ENCODE measurements at regions of chr1 and their contacts with region 1.

Region 1: GRCh38 chr1:1033009-1033587 is 13.2 kb downstream of the AGRN start:
- DNase-seq: peak; percentile 52
- H3K4me3 ChIP-seq: peak overlapping the region; percentile 29 to 65 (median 47)
- H3K27ac ChIP-seq: peak overlapping the region in 2 of 4 donors; percentile 7 to 44
- H3K4me1 ChIP-seq: peaks cover 12 to 53% (median 21%) of the 10 kb centered on the region in 3 donors
- H3K27me3 ChIP-seq: peaks cover 0 to 63% (median 0%) of the 10 kb centered on the region in 4 donors
- CTCF ChIP-seq: peak; percentile 48 to 81 (median 76)
- POLR2A ChIP-seq: no peak

Region 2: GRCh38 chr1:1069061-1069708 is 36.1 kb after region 1 on chr1:
- intact Hi-C with region 1: no loop called
- DNase-seq: no peak
- H3K4me3 ChIP-seq: peak overlapping the region; percentile 29 to 70 (median 48)
- H3K27ac ChIP-seq: peak overlapping the region; percentile 78 to 89 (median 82)
- H3K4me1 ChIP-seq: peaks cover 22 to 58% (median 23%) of the 10 kb centered on the region in 3 donors
- H3K27me3 ChIP-seq: peaks cover 0 to 89% (median 8%) of the 10 kb centered on the region in 4 donors
- CTCF ChIP-seq: no peak
- POLR2A ChIP-seq: peak in 1 of 4 donors; percentile 49

Region 3: DNA sequence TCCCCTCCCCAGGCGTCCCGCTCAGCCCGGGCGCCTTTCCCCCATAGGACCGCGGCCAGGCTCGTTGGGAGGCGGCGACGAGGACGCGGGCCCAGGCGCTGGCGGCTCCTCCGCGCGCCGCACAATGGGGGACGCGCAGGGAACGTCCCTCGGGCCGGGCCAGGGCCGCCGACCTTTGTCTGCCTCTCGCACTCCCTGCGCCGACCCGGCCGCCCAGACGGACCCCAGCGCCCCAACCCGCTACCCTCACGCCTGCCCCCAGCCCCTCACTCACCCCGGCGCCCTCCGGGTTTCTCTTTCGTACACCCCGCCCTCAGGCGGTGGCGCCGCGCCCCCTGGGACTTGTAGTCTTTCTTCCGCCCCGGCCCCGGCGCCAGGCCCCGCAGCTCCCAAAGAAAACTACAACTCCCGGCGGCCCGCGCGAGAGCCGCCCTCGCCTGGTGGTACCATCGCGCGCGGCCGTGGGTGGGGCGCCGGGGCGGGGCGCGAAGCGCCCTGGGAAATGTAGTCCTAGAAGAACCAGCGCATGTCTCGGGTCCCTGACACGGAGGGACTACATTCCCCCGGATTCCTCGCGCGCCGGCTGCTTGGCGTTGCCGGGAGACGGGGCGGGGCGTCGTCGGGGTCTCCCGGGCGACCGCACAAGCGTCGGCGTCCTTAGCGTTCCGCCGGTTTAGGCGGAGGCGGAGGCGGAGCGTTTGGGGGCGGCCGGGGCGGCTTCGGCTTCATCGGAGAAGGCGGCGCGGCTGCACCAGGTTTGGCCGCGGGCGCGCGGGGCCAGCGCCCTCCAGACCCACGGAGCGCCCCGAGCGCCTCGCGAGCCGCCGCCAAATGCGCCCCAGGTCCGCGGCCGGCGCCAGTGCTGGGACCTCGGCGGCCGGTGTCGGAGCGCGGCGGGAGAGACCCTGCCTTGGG is 82.9 kb after region 1 on chr1 and contains the start of gene C1orf159:
- intact Hi-C with region 1: loop called (anchors 10 kb)
- DNase-seq: peak; percentile 97
- H3K4me3 ChIP-seq: peak within 1 kb of the TSS; percentile 62 to 99 (median 96)
- H3K27ac ChIP-seq: peak within 1 kb of the TSS; percentile 86 to 94 (median 90)
- H3K4me1 ChIP-seq: peaks cover 9 to 24% (median 15%) of the 10 kb centered on the region in 3 donors
- H3K27me3 ChIP-seq: peaks cover 0 to 39% (median 0%) of the 10 kb centered on the region in 4 donors
- CTCF ChIP-seq: peak in 2 of 6 experiments; percentile 8 to 37
- POLR2A ChIP-seq: no peak
- total RNA-seq, gene C1orf159: 6.9 to 19.6 (median 14.7) TPM

Region 4: GRCh38 chr1:1291548-1292441 is 258.7 kb after region 1 on chr1:
- intact Hi-C with region 1: loop called (anchors 10 kb)
- DNase-seq: no peak
- H3K4me3 ChIP-seq: no peak overlapping the region
- H3K27ac ChIP-seq: no peak overlapping the region
- H3K4me1 ChIP-seq: peaks cover 9 to 23% (median 11%) of the 10 kb centered on the region in 3 donors
- H3K27me3 ChIP-seq: peaks cover 0 to 18% (median 0%) of the 10 kb centered on the region in 4 donors
- CTCF ChIP-seq: peak; percentile 60 to 90 (median 84)
- POLR2A ChIP-seq: no peak